ENCODE measurements at regions of chr11 and their contacts with region 1.

Region 1: GRCh38 chr11:2305140-2305840 is 3.5 kb downstream of the TSPAN32 start:
- DNase-seq: peak; percentile 69
- H3K4me3 Mint-ChIP-seq: peak overlapping the region; percentile 59
- H3K27ac Mint-ChIP-seq: no peak overlapping the region
- H3K4me1 Mint-ChIP-seq: peaks cover 25% of the 10 kb centered on the region
- H3K27me3 Mint-ChIP-seq: no peaks in the 10 kb centered on the region

Region 2: DNA sequence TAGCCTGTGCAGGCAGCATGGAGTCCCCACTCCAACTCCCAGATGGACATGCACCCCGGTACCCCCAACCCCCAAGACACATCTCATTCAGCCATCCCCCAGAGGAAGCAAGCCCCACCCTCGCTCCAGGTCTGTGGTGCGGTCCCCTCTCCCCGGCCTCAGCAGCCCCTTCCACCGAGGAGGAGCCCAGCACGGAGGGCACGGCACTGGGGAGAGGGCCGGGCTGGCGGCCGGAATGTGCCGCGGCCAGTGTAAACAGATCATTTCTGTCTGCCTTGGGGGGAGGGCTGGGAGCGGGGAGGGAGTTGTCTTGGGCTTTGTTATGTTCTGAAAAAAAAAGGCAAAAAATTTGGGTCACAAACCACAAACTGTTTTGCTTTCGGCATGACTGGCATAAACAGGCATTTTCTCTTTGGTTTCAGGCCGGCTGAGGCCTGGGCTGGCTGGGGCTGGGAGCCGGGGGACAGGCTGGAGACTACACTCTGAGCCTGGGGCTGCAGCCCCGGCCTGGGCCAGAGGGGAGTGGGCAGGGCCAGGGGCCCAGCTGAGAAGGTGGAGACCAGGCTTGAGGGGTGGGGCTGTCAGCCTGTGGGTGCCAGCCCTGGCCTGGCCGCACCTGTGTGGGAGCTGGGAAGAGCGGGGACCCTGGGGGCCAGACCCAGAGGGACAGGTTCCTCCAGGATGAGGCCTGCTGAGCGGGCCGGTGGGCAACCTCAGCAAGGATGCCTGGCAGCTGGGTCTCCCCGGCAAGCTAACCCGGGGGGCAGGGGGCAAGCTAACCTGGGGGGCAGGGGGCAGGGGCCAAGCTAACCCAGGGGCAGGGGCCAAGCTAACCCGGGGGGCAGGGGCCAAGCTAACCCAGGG is 182.8 kb before region 1 on chr11:
- intact Hi-C with region 1: no loop called
- DNase-seq: no peak
- H3K4me3 Mint-ChIP-seq: no peak overlapping the region
- H3K27ac Mint-ChIP-seq: no peak overlapping the region
- H3K4me1 Mint-ChIP-seq: no peaks in the 10 kb centered on the region
- H3K27me3 Mint-ChIP-seq: peaks cover 14% of the 10 kb centered on the region

Region 3: DNA sequence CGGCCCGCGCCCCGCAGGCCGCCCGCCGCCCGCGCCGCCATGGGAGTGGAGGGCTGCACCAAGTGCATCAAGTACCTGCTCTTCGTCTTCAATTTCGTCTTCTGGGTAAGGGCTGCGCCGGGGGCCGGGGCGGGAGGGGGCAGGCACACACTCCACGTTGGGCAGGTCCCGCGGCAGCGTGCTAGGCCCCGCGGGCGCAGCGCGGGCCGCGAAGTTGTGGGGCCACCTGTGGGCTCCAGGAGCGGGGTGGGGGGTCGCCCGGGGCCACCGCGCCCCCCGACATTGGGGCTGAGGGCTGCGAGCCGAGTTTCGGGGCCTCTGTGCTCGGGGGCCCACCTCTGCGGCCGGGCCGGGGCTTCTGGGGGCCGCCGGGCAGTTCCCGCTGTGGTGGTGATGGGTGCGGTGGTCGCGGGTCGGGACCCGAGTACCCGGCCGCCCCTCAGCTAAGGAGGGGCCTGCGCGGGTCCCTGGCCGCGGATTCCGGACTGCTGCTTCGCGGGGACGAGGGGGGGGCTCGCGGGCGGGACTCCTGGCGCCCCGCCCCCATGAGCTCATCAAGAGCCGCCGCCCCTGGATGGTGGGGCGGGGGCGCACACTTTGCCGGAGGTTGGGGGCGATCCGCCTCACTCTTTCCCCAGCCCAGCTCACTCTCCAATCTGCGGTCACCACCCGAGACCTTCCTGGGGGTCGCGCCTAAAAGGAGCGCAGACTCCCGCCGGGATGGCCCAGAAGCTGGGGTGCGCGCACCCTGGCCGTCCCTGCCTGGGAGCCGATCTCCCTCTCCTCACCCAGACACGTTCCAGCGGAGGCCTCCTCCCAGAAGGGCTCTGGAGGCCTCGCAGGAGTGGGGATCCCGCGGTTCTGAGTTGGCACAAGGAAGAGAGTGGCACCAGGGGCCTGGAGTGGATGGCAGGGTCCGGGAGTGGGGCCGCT is 72.5 kb after region 1 on chr11:
- intact Hi-C with region 1: loop called (anchors 10 kb)
- DNase-seq: peak; percentile 41
- H3K4me3 Mint-ChIP-seq: peak overlapping the region; percentile 86
- H3K27ac Mint-ChIP-seq: peak overlapping the region; percentile 87
- H3K4me1 Mint-ChIP-seq: peaks cover 15% of the 10 kb centered on the region
- H3K27me3 Mint-ChIP-seq: peaks cover 2% of the 10 kb centered on the region

Region 4: DNA sequence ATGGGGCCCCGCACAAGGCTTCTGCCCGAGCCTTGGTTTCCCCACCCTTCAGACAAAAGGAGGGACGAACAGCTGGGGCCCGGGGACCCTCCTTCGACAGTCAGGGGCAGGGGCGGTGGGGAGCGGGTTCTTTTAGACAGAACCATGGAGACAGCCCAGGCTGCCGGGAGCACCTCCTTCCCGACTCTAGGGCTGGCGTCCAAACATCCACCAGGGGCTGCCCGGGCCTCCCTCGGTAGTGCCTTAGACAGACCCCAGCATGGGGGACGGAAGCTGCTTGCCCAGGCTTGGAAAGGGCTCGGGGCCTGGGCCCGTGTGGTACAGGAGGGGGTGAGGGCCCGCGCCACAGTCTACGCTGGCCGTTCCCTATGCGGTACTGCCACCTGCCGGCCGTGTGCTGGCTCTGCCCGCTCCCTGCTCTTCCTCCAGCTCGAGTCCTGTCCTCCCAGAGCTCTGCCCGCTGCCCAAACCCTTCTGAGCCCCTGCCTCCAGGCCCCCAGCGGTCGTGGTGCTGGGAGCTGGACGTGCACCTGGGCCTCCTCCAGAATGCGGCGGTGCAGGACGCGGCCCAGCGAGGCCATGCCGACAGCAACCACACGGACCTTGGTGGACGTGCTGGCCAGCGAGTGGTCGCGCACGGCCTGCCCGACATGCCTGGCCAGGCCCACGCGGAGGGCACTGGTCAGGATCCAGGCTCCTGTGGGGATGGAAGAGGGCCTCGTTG is 115.4 kb after region 1 on chr11:
- intact Hi-C with region 1: loop called (anchors 1 kb)
- DNase-seq: peak; percentile 58
- H3K4me3 Mint-ChIP-seq: no peak overlapping the region
- H3K27ac Mint-ChIP-seq: no peak overlapping the region
- H3K4me1 Mint-ChIP-seq: no peaks in the 10 kb centered on the region
- H3K27me3 Mint-ChIP-seq: no peaks in the 10 kb centered on the region

Region 5: DNA sequence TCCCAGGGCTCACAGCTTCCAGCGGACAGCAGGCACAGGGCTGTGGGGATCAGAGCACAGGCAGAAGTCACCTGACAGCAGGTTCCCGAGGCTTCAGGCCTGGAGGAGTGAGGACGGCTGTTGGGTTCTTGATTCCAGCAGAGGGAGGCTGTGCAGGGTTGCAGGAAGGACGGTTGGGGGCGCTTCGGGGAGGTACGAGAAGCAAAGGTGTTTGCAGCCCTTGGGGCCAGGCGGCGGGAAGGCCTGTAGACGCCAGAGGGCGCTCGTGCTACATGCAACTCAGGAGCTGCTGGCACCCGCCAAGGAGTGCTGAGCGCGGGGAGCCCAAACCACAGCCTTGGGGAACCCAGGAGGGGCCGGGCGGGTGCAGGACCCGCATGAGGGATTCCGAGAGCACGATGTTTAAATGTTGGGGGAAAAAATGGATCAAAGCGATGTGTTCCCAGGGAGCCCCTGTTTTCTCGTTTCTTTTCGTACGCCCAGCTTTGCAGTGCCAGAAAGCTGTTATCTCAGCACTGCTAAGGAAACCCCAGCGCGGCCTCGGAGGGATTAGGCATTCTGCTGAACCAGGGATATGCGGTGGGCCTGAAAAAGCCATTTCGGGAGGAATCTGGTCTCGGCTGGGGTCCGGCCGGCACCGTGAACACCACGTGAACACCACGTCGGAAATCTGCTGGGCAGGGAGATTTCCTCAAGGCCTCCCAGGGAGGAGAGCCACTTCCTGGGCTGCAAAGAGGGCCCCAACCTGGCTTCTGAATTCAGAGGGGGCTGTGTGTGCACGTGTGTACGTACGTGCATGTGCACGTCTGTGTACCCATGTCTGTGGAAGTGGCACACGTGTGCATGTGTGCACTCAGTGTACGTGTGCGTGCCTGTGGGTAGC is 227.7 kb after region 1 on chr11:
- intact Hi-C with region 1: loop called (anchors 5 kb)
- DNase-seq: peak; percentile 84
- H3K4me3 Mint-ChIP-seq: no peak overlapping the region
- H3K27ac Mint-ChIP-seq: peak overlapping the region; percentile 11
- H3K4me1 Mint-ChIP-seq: peaks cover 7% of the 10 kb centered on the region
- H3K27me3 Mint-ChIP-seq: no peaks in the 10 kb centered on the region

Region 6: GRCh38 chr11:2750682-2751387 is 445.5 kb after region 1 on chr11:
- intact Hi-C with region 1: no loop called
- DNase-seq: no peak
- H3K4me3 Mint-ChIP-seq: no peak overlapping the region
- H3K27ac Mint-ChIP-seq: no peak overlapping the region
- H3K4me1 Mint-ChIP-seq: no peaks in the 10 kb centered on the region
- H3K27me3 Mint-ChIP-seq: no peaks in the 10 kb centered on the region

Region 7: GRCh38 chr11:2892215-2893020 is 587.1 kb after region 1 on chr11:
- intact Hi-C with region 1: loop called (anchors 10 kb)
- DNase-seq: peak; percentile 59
- H3K4me3 Mint-ChIP-seq: peak overlapping the region; percentile 83
- H3K27ac Mint-ChIP-seq: peak overlapping the region; percentile 72
- H3K4me1 Mint-ChIP-seq: peaks cover 9% of the 10 kb centered on the region
- H3K27me3 Mint-ChIP-seq: peaks cover under 1% of the 10 kb centered on the region